ENCODE measurements at regions of chr12 and their contacts with region 1.

Region 1: GRCh38 chr12:80763874-80764273 is 47.2 kb downstream of the MYF5 start:
- DNase-seq: peak; percentile 60
- H3K4me3 ChIP-seq: no peak overlapping the region
- H3K27ac ChIP-seq: no peak overlapping the region
- H3K4me1 ChIP-seq: peaks cover 4% of the 10 kb centered on the region; the same call in 1 of the 2 replicates
- H3K27me3 ChIP-seq: no peaks in the 10 kb centered on the region

Region 2: GRCh38 chr12:80217011-80217535 is 546.8 kb before region 1 on chr12:
- in situ Hi-C with region 1: loop called (anchors 25 kb)
- DNase-seq: no peak
- H3K4me3 ChIP-seq: no peak overlapping the region
- H3K27ac ChIP-seq: no peak overlapping the region
- H3K4me1 ChIP-seq: peaks cover 8% of the 10 kb centered on the region; the same call in 1 of the 2 replicates
- H3K27me3 ChIP-seq: no peaks in the 10 kb centered on the region

Region 3: DNA sequence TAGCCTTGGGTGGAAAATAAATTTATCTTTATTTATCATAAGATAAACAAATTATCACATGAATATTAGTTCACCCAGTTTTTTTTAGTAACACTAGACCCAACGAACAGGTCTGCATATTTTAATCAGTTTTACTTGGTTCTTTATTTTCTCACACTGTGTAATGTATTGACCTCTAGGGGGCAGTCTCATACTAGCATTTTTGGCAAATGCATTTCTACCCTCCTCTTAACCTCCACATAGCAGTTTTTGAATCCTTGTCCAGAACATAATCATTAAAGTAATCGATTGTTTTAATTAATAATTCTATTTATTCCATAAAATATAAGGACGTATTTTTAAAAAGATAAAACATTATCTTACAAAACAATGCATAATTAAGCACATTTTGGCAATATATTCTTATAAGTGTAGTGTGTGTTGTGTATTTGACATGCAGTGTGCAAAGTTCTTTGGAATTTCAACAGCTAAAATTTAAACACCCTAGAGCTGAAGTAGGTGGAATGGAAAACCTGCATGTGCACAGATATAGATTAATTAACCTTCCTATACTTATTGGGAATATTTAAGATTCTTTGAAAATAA is 351.4 kb before region 1 on chr12:
- in situ Hi-C with region 1: loop called (anchors 5 kb)
- DNase-seq: peak; percentile 80
- H3K4me3 ChIP-seq: no peak overlapping the region
- H3K27ac ChIP-seq: no peak overlapping the region
- H3K4me1 ChIP-seq: no peaks in the 10 kb centered on the region
- H3K27me3 ChIP-seq: no peaks in the 10 kb centered on the region

Region 4: DNA sequence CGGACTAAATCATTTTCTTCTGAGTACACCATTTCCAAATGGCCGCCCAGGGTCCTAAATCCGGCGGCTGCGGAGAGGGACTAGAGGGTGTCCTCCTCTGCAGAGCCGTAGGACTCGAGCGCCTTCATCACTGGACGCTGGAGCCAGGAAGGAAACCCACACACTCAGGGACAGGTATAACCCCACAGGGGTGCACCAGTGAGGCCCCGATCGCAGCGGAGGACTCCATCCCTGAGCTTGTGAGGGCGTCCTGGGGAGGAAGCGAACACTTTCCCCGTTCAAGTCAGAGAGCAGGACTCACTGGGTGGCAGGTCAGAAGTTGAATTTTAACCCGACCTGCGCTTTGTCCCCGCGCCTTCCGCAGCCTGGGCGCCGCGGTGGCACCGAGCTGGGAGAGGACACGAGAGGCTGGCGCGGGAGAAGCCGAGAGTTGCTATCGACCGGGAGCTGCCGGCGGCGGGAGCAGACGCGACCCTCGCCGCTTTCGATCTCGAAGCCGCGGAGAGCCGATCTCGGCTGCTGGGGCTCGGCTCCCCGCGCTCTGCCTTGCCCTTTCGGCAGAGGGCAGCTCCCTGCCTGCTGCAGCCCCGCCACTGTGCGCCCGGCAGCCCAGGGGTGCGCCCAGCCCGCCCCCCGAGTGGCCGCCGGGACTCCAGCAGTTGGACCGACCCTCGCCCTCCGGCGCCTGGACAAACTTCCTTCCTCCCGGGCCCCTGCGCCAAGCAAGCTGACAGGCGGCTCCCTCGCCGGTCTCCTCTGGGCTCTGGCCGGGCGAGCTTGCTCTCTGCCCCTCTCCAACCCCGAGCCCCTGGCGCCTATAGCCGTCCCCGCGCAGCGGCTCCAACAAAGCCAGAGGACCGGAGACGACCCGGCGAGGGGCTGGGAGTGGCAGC is 172.9 kb after region 1 on chr12:
- in situ Hi-C with region 1: no loop called
- DNase-seq: peak; percentile 68
- H3K4me3 ChIP-seq: peak overlapping the region; percentile 83
- H3K27ac ChIP-seq: no peak overlapping the region
- H3K4me1 ChIP-seq: no peaks in the 10 kb centered on the region
- H3K27me3 ChIP-seq: no peaks in the 10 kb centered on the region

Measured in GM23248 (cell line).